Mammary epithelial cell (primary cell): ENCODE measurements at regions of chr6 and their contacts with region 1.

Region 1: DNA sequence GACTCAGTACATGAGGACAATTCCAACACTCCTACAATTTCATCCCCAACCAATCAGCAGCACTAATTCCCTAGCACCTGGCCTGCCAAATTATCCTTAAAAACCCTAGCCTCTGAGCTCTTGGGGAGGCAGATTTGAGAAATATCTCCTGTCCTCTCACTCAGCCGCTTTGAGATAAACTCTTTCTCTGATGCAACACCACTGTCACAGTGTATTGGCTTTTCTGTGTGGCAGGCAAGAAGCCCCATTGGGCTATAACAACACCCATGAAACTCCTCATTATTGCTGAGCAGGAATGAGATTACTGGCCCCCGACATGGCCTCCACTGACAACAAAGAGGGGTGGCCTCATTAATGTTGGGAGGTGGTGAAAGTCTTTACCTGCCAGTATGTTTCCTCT is 515.5 kb downstream of the HACE1 start:
- DNase-seq: no peak
- H3K4me3 ChIP-seq: no peak overlapping the region
- H3K27ac ChIP-seq: no peak overlapping the region
- H3K4me1 ChIP-seq: no peaks in the 10 kb centered on the region
- H3K27me3 ChIP-seq: no peaks in the 10 kb centered on the region
- CTCF ChIP-seq: no peak

Region 2: GRCh38 chr6:104409913-104410312 is 65.7 kb after region 1 on chr6:
- CTCF ChIA-PET with region 1: no interaction called
- dilution Hi-C with region 1: loop called (anchors 5 kb)
- in situ Hi-C with region 1: no loop called
- intact Hi-C with region 1: no loop called
- DNase-seq: no peak
- H3K4me3 ChIP-seq: no peak overlapping the region
- H3K27ac ChIP-seq: no peak overlapping the region
- H3K4me1 ChIP-seq: no peaks in the 10 kb centered on the region
- H3K27me3 ChIP-seq: no peaks in the 10 kb centered on the region
- CTCF ChIP-seq: no peak